Activated T-helper 1 cell treated with anti-CD3 and anti-CD28 coated beads, Interleukin-12 subunit alpha, Interleukin-12 subunit beta, Interleukin-2, Interleukin-4 antibody, amounts not matched to agents 30 ng/mL and 10 ng/mL and 1 ng/mL, durations not matched to agents 14 hours and 24 hours and 36 hours (primary cell): ENCODE measurements at regions of chr7 and their contacts with region 1.

Region 1: GRCh38 chr7:158847451-158847866 is 8.9 kb upstream of the DYNC2I1 start:
- DNase-seq: no peak
- H3K4me3 Mint-ChIP-seq: peak overlapping the region; percentile 82
- H3K27ac Mint-ChIP-seq: peak overlapping the region; percentile 94
- H3K4me1 Mint-ChIP-seq: peaks cover 38% of the 10 kb centered on the region
- H3K27me3 Mint-ChIP-seq: no peaks in the 10 kb centered on the region

Region 2: GRCh38 chr7:158782761-158783401 is 64.6 kb before region 1 on chr7:
- intact Hi-C with region 1: no loop called
- DNase-seq: no peak
- H3K4me3 Mint-ChIP-seq: no peak overlapping the region
- H3K27ac Mint-ChIP-seq: no peak overlapping the region
- H3K4me1 Mint-ChIP-seq: peaks cover 8% of the 10 kb centered on the region
- H3K27me3 Mint-ChIP-seq: no peaks in the 10 kb centered on the region

Region 3: GRCh38 chr7:158863611-158864506 is 16.4 kb after region 1 on chr7:
- intact Hi-C with region 1: loop called (anchors 2 kb)
- DNase-seq: peak; percentile 37
- H3K4me3 Mint-ChIP-seq: peak overlapping the region; percentile 85
- H3K27ac Mint-ChIP-seq: peak overlapping the region; percentile 96
- H3K4me1 Mint-ChIP-seq: peaks cover 68% of the 10 kb centered on the region
- H3K27me3 Mint-ChIP-seq: no peaks in the 10 kb centered on the region